IMR-90 (cell line): ENCODE measurements at regions of chr6 and their contacts with region 1.

Region 1: DNA sequence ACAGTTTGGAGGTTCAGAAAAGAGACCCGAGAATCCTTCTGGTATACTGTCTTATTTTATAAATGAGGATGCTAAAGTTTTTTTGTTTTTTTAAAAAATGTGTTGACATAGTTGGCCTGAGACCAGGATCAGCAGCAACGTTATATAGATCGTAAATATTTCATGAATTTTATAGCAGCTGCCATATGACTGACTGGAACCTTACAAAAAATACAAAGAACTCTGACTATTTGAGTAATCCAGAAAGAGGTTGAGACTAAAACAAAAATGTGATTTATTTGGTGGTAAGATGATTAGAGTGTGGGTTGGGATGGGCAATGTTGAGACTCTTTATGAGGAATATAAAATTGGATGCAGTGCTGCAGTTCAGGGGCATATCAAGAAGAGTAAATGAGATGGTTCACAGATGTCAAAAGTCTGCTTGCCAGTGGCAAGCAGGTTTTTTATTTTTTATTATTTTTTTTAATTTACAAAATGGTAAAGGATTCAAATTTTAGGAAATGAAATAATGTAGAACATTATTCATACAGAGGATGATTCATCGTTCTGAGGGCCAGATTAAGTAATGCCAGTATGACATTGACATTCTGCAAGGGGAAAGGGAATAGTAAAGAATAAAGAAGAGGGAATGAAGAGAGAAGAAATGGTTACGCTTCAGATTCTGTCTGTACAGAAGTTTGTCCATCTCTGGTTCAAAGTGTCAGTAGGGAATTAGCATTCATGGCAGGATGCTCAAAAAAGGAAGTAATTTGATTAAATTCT is 58.5 kb downstream of the SCAF8 start:
- DNase-seq: peak; percentile 21
- ATAC-seq: peak; percentile 29
- H3K4me3 ChIP-seq: no peak overlapping the region
- H3K27ac ChIP-seq: no peak overlapping the region
- H3K4me1 ChIP-seq: peaks cover 2% of the 10 kb centered on the region; the same call in 1 of the 2 replicates
- H3K27me3 ChIP-seq: no peaks in the 10 kb centered on the region
- CTCF ChIP-seq: no peak
- POLR2A ChIP-seq: no peak
- RAD21 ChIP-seq: no peak

Region 2: GRCh38 chr6:154773610-154774089 is 18.1 kb before region 1 on chr6:
- CTCF ChIA-PET with region 1: interaction called, 3 read pairs
- POLR2A ChIA-PET with region 1: no interaction called
- dilution Hi-C with region 1: no loop called
- in situ Hi-C with region 1: no loop called
- intact Hi-C with region 1: loop called (anchors 2 kb)
- DNase-seq: no peak
- ATAC-seq: no peak
- H3K4me3 ChIP-seq: no peak overlapping the region
- H3K27ac ChIP-seq: no peak overlapping the region
- H3K4me1 ChIP-seq: no peaks in the 10 kb centered on the region
- H3K27me3 ChIP-seq: no peaks in the 10 kb centered on the region
- CTCF ChIP-seq: no peak
- POLR2A ChIP-seq: no peak
- RAD21 ChIP-seq: no peak